ENCODE measurements at regions of chr12 and their contacts with region 1.

Region 1: GRCh38 chr12:30985814-30986452 is 59.4 kb downstream of the TSPAN11 start:
- DNase-seq: no peak
- ATAC-seq: peak; percentile 77

Region 2: DNA sequence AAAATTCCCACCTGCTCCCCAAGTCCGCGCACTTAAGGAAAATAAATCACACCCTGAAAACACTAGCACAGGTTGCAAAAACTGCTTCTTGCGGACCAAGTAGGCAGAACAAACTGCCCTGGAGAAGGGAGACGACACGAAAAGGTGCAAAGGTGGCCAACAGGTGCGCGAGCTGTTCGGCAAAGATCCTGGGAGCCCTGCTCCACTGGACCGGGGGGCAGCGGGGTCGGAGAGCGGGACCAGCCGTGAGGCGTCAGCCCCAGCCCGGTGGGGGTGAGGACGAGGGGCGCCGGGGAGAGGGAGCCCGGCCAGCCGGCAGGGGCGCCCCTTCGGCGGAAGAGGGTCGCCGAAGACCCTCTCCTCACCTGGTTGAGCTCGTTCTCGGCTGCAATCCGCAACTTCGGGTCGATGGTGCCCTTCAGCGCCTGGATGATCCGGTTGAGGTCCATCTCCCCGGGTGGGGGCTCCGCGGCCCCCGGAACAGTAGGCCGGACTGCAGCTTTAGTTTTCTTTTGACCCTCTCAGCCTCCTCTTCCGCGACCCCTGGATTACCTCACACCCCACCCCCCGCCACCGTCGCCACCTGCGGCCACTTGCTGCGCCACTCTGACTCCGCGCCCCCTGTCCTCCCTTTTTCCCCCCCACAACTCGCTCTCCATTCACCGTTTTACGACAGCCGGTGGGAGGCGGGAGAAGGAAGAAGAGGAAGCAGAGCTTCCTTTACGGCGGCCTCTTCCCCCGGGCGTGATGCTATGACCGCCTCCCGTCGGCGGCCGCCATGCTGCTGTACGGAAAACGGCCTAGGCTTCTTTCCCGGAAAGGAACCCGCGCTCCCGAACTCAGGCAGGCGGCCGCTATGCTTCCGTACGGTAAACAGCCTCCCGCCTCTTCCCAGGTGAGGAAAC is 290.5 kb before region 1 on chr12 and contains the start of gene IPO8:
- intact Hi-C with region 1: no loop called
- DNase-seq: peak; percentile 97
- ATAC-seq: peak; percentile 96
- total RNA-seq, gene IPO8: 21.5 TPM

Region 3: GRCh38 chr12:30806989-30807694 is 178.8 kb before region 1 on chr12:
- intact Hi-C with region 1: no loop called
- DNase-seq: no peak
- ATAC-seq: peak; percentile 85

Region 4: DNA sequence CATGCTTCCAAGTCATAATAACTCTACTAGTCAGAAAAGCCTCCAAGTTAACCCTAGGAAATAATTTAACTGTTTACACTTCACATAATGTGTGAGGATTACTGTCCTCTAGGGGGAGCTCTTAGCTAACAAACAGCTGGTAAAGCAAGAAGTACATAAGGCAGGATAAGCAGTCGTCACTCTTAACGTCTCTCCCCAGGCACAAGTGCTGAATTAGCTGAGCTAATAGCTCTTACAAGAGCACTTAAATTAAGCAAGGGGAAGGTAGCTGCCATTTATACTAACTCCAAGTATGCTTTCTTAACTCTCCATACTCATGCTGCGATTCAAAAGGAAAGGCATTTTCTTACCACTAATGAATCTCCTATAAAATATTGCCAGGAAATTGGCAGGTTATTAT is 138.7 kb before region 1 on chr12:
- intact Hi-C with region 1: loop called (anchors 1 kb)
- DNase-seq: no peak
- ATAC-seq: no peak

Region 5: GRCh38 chr12:31057671-31058070 is 71.7 kb after region 1 on chr12:
- intact Hi-C with region 1: loop called (anchors 5 kb)
- DNase-seq: no peak
- ATAC-seq: no peak

Region 6: GRCh38 chr12:31238764-31239387 is 252.9 kb after region 1 on chr12:
- intact Hi-C with region 1: loop called (anchors 5 kb)
- DNase-seq: no peak
- ATAC-seq: peak; percentile 68

Measured in Right ventricle myocardium inferior (tissue), 1 donor.